Activated naive CD4-positive, alpha-beta T cell treated with anti-CD3 and anti-CD28 coated beads for 36 hours (primary cell): ENCODE measurements at regions of chr10 and their contacts with region 1.

Region 1: DNA sequence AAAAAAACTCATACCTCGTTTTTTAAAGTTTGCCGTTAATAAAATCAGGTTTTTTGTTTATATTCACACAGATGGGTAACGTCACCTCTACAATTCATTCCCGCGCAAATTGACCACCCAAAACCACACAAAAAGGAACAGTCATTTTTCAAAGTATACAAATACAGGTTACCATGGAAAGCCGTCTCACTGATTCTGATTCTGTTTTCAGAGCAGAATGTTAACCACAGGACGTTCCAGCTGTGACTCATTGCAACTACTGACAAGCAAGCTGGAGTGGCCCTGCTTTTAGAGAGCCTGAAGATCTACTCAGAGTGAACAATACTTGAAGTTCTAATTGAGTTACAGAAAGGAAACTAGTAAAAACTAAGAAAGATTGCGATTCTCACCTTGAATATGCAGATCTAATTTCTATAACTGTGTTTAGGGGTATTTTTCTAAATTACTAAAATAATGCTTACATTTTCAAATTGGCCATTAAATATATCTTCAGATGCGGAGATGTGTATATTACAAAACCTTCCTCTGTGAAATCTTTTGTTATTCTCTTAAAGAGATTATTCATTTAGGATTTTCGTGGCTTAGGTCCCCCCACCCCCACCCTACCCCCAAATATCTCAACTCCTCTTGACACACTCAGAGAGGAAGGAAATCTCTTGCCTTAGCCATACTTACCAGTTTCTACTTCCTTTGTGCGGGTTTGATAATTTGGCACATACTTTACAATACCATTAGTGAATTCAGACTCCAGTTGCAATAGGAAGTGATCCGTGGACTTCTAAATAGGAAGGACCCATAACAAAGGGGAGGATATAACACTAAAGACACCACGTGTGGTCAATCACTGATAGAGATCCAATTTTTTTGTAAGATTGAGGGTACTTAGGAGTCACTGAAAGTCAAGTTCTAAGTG is 106.0 kb downstream of the CUBN start:
- DNase-seq: peak; percentile 93
- H3K4me3 Mint-ChIP-seq: peak overlapping the region; percentile 7
- H3K27ac Mint-ChIP-seq: peak overlapping the region; percentile 78
- H3K4me1 Mint-ChIP-seq: peaks cover 59% of the 10 kb centered on the region
- H3K27me3 Mint-ChIP-seq: peaks cover 2% of the 10 kb centered on the region

Region 2: DNA sequence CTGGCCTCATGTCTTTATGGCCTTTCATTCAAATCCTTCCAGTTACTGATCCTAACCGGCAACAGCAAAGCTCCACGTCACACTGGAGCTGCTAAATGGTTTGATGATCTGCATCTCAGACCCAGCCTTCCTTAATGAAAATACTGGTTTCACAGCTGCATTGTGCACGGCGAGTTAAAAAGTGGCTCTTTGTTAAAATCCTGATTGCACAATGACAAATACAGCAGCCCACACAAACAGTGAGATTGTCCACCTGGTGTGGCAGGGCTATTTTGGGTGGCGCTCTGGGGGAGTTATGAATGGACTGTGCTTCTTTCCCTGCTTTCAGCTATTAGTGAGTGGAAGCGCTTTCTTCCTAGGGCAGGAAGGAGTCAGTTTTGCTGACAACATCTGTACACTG is 438.5 kb before region 1 on chr10:
- CTCF ChIA-PET with region 1: no interaction called
- intact Hi-C with region 1: no loop called
- DNase-seq: no peak
- H3K4me3 Mint-ChIP-seq: no peak overlapping the region
- H3K27ac Mint-ChIP-seq: no peak overlapping the region
- H3K4me1 Mint-ChIP-seq: no peaks in the 10 kb centered on the region
- H3K27me3 Mint-ChIP-seq: peaks cover 14% of the 10 kb centered on the region

Region 3: DNA sequence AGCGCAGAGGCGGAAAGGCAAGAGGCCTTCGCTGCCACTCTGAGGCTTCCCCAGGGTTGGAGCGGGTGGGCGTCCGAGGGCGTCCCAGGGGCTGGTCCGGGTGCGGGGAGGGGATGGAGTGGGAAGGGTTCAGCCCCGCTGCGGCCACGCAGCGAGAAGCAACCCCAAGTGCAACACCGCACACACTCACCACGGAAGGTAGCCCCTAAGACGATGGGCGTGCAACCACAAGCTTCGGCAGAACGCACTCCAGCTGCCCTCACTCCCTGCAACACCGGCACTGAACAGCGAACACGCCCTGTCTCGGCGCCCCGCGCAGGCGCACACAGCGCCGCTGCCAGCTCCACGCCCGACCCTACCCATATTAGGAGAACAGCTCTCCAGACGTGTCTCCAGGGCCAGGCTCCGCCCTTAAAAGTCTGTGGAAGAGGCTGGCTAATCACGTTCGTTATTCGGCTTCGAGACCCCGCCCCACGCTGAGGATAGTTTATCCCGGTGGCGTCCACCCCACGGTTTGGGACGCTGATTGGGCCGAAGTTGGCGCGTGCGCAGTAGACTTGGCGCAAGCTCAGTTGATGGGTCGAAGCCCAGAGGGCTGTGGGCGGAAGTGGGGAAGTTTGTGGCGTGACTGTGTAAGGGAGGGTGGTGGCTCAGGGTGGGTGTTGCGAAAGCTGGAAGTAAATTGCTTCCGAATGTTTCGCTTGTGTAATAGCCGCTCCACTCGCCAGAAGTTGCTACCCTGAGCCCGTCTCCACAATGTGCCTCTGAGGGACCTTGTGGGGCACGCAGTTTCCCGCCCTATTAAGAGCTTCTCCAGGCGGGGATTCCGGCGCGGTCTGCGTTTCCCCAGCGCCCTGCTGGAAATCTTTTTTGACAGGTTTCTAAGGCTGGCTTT is 206.3 kb before region 1 on chr10 and contains the start of gene RSU1:
- CTCF ChIA-PET with region 1: no interaction called
- intact Hi-C with region 1: loop called (anchors 1 kb)
- DNase-seq: peak; percentile 100
- H3K4me3 Mint-ChIP-seq: peak within 1 kb of the TSS; percentile 89
- H3K27ac Mint-ChIP-seq: peak within 1 kb of the TSS; percentile 90
- H3K4me1 Mint-ChIP-seq: peaks cover 23% of the 10 kb centered on the region
- H3K27me3 Mint-ChIP-seq: no peaks in the 10 kb centered on the region
- total RNA-seq, gene RSU1: 43.4 to 45.1 TPM

Region 4: GRCh38 chr10:16954280-16955030 is 69.2 kb before region 1 on chr10:
- CTCF ChIA-PET with region 1: no interaction called
- intact Hi-C with region 1: no loop called
- DNase-seq: no peak
- H3K4me3 Mint-ChIP-seq: no peak overlapping the region
- H3K27ac Mint-ChIP-seq: no peak overlapping the region
- H3K4me1 Mint-ChIP-seq: peaks cover 11% of the 10 kb centered on the region
- H3K27me3 Mint-ChIP-seq: no peaks in the 10 kb centered on the region

Region 5: DNA sequence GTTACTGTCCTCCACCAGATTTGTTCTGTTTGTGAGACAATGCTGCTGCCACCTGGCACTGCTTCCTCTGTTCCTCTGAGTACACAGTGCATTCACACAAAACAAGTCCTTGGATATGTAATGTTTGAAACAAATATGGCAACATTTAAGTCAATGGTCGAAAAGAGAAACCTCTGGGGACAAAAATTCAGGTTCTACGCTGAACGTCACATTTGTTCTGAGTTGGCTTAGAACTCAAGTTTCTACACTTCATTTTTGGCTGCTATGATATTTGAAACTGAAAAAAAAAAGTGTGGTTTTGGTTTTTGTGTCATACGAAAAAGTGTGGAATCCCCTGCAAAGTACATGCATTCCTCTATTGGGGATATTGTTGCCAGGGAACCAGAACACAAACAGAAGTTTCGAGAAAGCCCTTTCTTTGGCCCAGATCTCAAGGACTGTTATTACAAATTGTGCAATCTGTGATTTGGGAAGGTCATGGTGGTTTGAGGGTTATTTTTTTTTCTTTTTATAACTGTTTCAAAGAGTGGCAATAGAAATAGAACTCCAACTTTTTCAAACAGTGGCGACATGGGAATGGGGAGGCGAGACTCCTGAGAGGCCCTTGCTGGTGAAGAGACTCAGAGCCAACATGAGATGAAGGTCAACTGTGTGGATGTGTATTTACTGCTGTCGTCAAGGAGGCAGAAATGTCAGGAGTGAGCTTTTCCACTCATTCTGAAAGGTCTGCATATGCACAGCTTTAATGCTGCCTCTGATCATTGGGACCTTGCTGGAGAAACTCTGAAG is 21.5 kb before region 1 on chr10:
- CTCF ChIA-PET with region 1: interaction called, 4 read pairs
- intact Hi-C with region 1: loop called (anchors 1 kb)
- DNase-seq: peak; percentile 44
- H3K4me3 Mint-ChIP-seq: no peak overlapping the region
- H3K27ac Mint-ChIP-seq: peak overlapping the region; percentile 5
- H3K4me1 Mint-ChIP-seq: peaks cover 57% of the 10 kb centered on the region
- H3K27me3 Mint-ChIP-seq: peaks cover 5% of the 10 kb centered on the region

Region 6: DNA sequence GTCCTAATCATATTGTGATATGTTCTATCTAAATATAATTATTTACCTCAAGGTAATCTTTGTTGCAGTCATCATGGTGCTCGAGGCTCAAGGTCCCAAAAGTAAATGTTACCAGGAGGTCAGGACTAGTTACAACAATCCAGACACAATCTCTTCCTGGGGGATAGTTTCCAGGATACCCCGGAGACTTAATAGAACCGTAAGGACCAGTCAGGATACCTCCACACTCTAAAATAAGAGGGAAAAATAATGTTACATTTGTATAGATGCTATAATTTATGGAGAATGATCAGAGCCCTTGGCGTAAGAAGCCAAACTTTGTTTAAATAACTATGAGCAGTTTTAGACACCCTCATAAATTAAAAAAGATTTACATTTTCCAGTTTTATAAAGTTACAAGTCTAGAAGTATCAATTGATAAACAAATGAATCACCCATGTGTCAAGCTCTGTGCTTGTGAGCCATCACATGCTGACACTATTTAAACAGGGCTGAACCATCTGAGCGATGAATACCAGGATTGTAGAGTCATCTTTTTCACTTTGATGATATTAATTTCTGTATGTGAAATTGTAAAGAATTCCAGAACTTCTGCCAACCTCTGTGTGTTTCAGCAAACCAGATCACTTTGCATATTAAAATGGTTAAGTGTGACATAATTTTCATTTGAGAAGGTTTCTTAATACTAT is 64.6 kb after region 1 on chr10:
- CTCF ChIA-PET with region 1: no interaction called
- intact Hi-C with region 1: no loop called
- DNase-seq: no peak
- H3K4me3 Mint-ChIP-seq: no peak overlapping the region
- H3K27ac Mint-ChIP-seq: no peak overlapping the region
- H3K4me1 Mint-ChIP-seq: no peaks in the 10 kb centered on the region
- H3K27me3 Mint-ChIP-seq: no peaks in the 10 kb centered on the region

Region 7: DNA sequence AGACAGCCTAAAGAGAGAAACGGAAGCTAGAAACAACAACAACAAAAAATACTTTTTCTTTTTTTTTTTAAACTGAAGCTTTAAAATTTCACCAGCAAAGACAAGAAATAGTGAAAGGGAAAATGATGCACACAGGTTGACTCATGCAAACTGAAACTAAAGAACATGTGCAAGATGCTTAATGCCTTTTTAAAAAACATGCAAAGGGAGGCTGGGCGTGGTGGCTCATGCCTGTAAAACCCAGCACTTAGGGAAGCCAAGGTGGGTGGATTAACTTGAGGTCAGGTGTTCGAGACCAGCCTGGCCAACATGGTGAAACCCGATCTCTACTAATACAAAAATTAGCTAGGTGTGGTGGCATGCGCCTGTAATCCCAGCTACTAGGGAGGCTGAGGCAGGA is 121.1 kb after region 1 on chr10:
- CTCF ChIA-PET with region 1: no interaction called
- intact Hi-C with region 1: loop called (anchors 1 kb)
- DNase-seq: peak; percentile 84
- H3K4me3 Mint-ChIP-seq: no peak overlapping the region
- H3K27ac Mint-ChIP-seq: peak overlapping the region; percentile 47
- H3K4me1 Mint-ChIP-seq: peaks cover 28% of the 10 kb centered on the region
- H3K27me3 Mint-ChIP-seq: no peaks in the 10 kb centered on the region

Region 8: DNA sequence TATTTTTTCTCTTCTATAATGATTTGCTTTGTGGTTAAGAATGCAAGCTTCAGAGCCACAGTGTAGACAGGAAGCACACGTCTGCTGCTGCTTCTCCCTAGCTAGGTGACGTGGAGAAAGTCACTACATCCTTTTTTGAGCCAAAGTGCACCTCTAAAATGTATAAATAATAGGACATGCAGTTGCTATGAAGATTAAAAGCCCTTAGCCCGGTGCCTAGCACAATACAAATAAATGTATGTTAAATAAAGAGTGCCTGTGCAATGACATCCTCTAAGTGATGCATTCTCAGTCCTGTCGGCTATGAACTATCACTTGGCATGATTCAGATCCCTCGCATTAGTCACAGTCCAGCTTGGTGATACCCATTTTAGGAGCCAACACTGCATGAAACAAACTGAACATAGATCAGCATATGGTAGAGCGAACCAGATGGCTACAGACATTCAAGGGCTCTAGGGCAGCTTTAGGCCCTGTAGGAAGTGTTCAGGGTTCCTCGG is 182.6 kb after region 1 on chr10:
- CTCF ChIA-PET with region 1: interaction called, 3 read pairs
- intact Hi-C with region 1: loop called (anchors 1 kb)
- DNase-seq: peak; percentile 60
- H3K4me3 Mint-ChIP-seq: peak overlapping the region; percentile 3
- H3K27ac Mint-ChIP-seq: peak overlapping the region; percentile 54
- H3K4me1 Mint-ChIP-seq: peaks cover 23% of the 10 kb centered on the region
- H3K27me3 Mint-ChIP-seq: no peaks in the 10 kb centered on the region

Region 9: GRCh38 chr10:17443707-17444387 is 420.2 kb after region 1 on chr10:
- CTCF ChIA-PET with region 1: no interaction called
- intact Hi-C with region 1: loop called (anchors 1 kb)
- DNase-seq: peak; percentile 61
- H3K4me3 Mint-ChIP-seq: peak overlapping the region; percentile 46
- H3K27ac Mint-ChIP-seq: peak overlapping the region; percentile 28
- H3K4me1 Mint-ChIP-seq: peaks cover 16% of the 10 kb centered on the region
- H3K27me3 Mint-ChIP-seq: peaks cover 3% of the 10 kb centered on the region

Region 10: DNA sequence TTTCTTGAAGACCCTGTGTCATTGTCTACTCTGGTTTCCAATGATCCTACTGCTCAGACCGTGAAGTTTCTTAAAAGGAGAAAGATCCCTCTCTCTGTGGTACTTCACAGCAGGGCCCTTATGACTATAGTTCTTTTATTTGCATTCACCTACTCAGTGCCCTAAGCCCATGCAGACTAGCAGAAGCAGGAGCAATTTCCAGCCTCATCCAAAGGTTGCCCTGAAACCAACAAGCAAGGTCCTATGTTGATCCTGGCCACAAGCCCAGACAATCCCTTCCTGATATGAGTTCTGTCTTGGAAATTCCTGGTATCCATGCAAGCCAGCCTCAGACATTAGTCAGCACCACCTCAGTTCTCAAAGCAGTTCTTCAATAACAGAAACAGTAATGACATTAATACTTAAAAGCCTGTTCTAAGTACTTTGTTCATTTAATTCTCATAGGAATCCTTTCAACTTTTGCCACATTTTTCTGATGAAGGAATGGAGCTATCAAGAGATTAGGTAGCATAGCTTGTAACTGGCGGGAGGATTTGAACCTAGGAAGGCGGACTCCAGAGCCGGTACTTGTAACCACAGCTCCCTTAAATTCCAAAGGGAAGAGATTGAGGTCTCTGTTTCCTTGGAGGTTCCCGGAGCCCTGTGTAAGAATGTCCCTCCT is 488.8 kb after region 1 on chr10:
- CTCF ChIA-PET with region 1: no interaction called
- intact Hi-C with region 1: loop called (anchors 1 kb)
- DNase-seq: no peak
- H3K4me3 Mint-ChIP-seq: no peak overlapping the region
- H3K27ac Mint-ChIP-seq: no peak overlapping the region
- H3K4me1 Mint-ChIP-seq: peaks cover 18% of the 10 kb centered on the region
- H3K27me3 Mint-ChIP-seq: no peaks in the 10 kb centered on the region